ENCODE measurements at regions of chr4 and their contacts with region 1.

Region 1: GRCh38 chr4:166594326-166594946 is 639.9 kb downstream of the SPOCK3 start:
- DNase-seq: peak; percentile 53 to 63 (median 60)
- ATAC-seq: peak; percentile 86
- H3K4me3 ChIP-seq: no peak overlapping the region
- H3K27ac ChIP-seq: no peak overlapping the region
- H3K4me1 ChIP-seq: no peaks in the 10 kb centered on the region
- H3K27me3 ChIP-seq: no peaks in the 10 kb centered on the region
- CTCF ChIP-seq: peak; percentile 8 to 76 (median 65)
- POLR2A ChIP-seq: no peak

Region 2: GRCh38 chr4:165343353-165344191 is 1250.9 kb before region 1 on chr4:
- intact Hi-C with region 1: no loop called
- DNase-seq: no peak
- ATAC-seq: peak; percentile 42
- H3K4me3 ChIP-seq: no peak overlapping the region
- H3K27ac ChIP-seq: no peak overlapping the region
- H3K4me1 ChIP-seq: peaks cover 6% of the 10 kb centered on the region
- H3K27me3 ChIP-seq: no peaks in the 10 kb centered on the region
- CTCF ChIP-seq: peak in 3 of 7 experiments; percentile 15 to 49 (median 25)
- POLR2A ChIP-seq: no peak

Region 3: DNA sequence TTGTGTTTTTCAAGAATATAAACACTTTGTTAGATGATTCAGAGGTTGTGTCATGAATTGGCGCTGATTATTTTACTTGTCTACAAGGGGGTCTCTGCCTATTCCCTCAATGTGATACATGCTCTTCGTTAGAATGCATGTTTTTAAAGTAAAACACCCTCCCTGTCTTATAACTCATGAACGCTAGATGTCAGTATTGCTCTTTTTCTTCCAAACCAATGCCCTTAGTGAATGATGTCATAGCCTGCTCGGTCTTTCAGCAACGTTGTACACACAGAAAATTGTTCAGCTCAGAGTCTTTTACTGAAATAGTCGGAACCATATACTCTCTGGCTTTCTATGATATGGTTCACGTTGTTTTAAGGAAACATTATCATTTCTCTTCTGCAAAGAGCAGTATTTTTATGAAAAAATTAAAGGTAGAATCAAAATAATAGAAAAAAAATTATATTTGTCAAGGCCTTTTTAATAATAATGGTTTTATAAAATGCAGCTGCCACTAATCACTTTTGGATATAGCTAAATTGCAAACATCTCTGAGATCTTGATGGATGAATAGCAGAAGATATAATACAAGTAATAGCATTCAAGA is 428.5 kb before region 1 on chr4:
- intact Hi-C with region 1: loop called (anchors 10 kb)
- DNase-seq: peak in 3 of 4 donors; percentile 22 to 40 (median 26)
- ATAC-seq: peak; percentile 94
- H3K4me3 ChIP-seq: no peak overlapping the region
- H3K27ac ChIP-seq: no peak overlapping the region
- H3K4me1 ChIP-seq: no peaks in the 10 kb centered on the region
- H3K27me3 ChIP-seq: no peaks in the 10 kb centered on the region
- CTCF ChIP-seq: peak; percentile 53 to 86 (median 76)
- POLR2A ChIP-seq: no peak

Region 4: GRCh38 chr4:166239354-166239753 is 355.1 kb before region 1 on chr4:
- intact Hi-C with region 1: no loop called
- DNase-seq: no peak
- ATAC-seq: no peak
- H3K4me3 ChIP-seq: no peak overlapping the region
- H3K27ac ChIP-seq: no peak overlapping the region
- H3K4me1 ChIP-seq: no peaks in the 10 kb centered on the region
- H3K27me3 ChIP-seq: no peaks in the 10 kb centered on the region
- CTCF ChIP-seq: no peak
- POLR2A ChIP-seq: no peak

Measured in body of pancreas (tissue), 4 donors.